SK-N-SH (cell line): ENCODE measurements at regions of chr2 and their contacts with region 1.

Region 1: GRCh38 chr2:50401772-50402653 is 629.9 kb downstream of the NRXN1 start:
- DNase-seq: peak; percentile 39
- H3K4me3 ChIP-seq: peak overlapping the region in 1 of 2 experiments; percentile 40; a peak in 1 of 4 replicates
- H3K27ac ChIP-seq: no peak overlapping the region
- H3K4me1 ChIP-seq: no peaks in the 10 kb centered on the region
- H3K27me3 ChIP-seq: no peaks in the 10 kb centered on the region
- CTCF ChIP-seq: peak; percentile 87
- EP300 ChIP-seq: no peak
- RAD21 ChIP-seq: peak; percentile 94

Region 2: GRCh38 chr2:48946449-48947048 is 1455.5 kb before region 1 on chr2:
- CTCF ChIA-PET with region 1: interaction called, 20 read pairs
- POLR2A ChIA-PET with region 1: no interaction called
- DNase-seq: peak; percentile 60
- H3K4me3 ChIP-seq: no peak overlapping the region; a peak in 1 of 4 replicates
- H3K27ac ChIP-seq: no peak overlapping the region
- H3K4me1 ChIP-seq: no peaks in the 10 kb centered on the region; a peak in 1 of 4 replicates
- H3K27me3 ChIP-seq: no peaks in the 10 kb centered on the region
- CTCF ChIP-seq: peak; percentile 89
- EP300 ChIP-seq: no peak
- RAD21 ChIP-seq: peak; percentile 97

Region 3: GRCh38 chr2:49616800-49617199 is 785.2 kb before region 1 on chr2:
- CTCF ChIA-PET with region 1: interaction called, 14 read pairs
- POLR2A ChIA-PET with region 1: no interaction called
- DNase-seq: peak; percentile 32
- H3K4me3 ChIP-seq: peak overlapping the region in 1 of 2 experiments; percentile 28; a peak in 1 of 4 replicates
- H3K27ac ChIP-seq: no peak overlapping the region
- H3K4me1 ChIP-seq: no peaks in the 10 kb centered on the region
- H3K27me3 ChIP-seq: no peaks in the 10 kb centered on the region
- CTCF ChIP-seq: peak; percentile 36
- EP300 ChIP-seq: no peak
- RAD21 ChIP-seq: peak; percentile 75

Region 4: DNA sequence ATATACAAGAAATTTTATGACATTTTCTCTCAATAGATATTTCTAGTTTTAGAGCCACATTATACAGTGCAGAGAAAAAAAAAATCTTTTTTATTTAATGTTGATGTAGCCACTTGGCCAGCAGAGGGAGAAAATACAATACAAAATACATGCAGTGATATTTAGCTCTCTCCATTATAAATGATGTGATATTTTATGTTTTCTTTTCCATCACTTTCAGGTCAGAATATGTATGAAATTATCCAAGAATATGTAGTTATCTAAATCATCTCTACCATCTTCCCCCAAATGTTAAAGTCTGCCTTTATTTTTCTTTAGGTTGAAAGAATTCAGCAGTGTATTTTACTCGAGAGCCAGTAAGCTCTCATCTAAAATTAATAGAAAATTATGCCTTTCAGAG is 714.1 kb before region 1 on chr2:
- CTCF ChIA-PET with region 1: interaction called, 36 read pairs
- POLR2A ChIA-PET with region 1: no interaction called
- DNase-seq: no peak
- H3K4me3 ChIP-seq: peak overlapping the region in 1 of 2 experiments; percentile 16; a peak in 1 of 4 replicates
- H3K27ac ChIP-seq: no peak overlapping the region
- H3K4me1 ChIP-seq: no peaks in the 10 kb centered on the region
- H3K27me3 ChIP-seq: no peaks in the 10 kb centered on the region
- CTCF ChIP-seq: peak; percentile 60
- EP300 ChIP-seq: no peak
- RAD21 ChIP-seq: peak; percentile 67

Region 5: DNA sequence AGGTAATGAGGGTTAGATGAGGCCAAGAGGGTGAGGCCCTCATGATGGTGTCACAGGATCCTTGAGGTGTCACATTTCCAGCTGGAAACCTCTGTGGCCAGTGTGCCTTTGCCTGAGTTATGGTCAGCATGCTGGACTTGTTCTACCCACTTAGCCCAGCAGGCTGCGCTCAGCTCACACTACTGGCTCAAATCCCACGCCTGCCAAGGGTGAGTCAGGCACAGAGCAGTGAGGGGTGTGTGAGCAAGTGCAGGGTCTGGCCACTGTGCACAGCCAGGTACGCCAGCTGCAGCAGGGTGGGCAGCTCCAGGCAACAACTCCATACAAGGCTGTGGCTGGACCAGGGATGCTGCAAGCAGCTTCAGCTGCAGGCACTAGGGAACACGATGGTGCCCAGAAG is 631.1 kb before region 1 on chr2:
- CTCF ChIA-PET with region 1: interaction called, 46 read pairs
- POLR2A ChIA-PET with region 1: no interaction called
- DNase-seq: peak; percentile 35
- H3K4me3 ChIP-seq: no peak overlapping the region; a peak in 1 of 4 replicates
- H3K27ac ChIP-seq: no peak overlapping the region
- H3K4me1 ChIP-seq: no peaks in the 10 kb centered on the region
- H3K27me3 ChIP-seq: no peaks in the 10 kb centered on the region
- CTCF ChIP-seq: peak; percentile 44
- EP300 ChIP-seq: no peak
- RAD21 ChIP-seq: peak; percentile 84

Region 6: GRCh38 chr2:50143822-50144575 is 258.0 kb before region 1 on chr2:
- CTCF ChIA-PET with region 1: interaction called, 14 read pairs
- POLR2A ChIA-PET with region 1: no interaction called
- DNase-seq: peak; percentile 43
- H3K4me3 ChIP-seq: peak overlapping the region; percentile 33 to 56; a peak in 2 of 4 replicates
- H3K27ac ChIP-seq: no peak overlapping the region; a peak in 1 of 4 replicates
- H3K4me1 ChIP-seq: no peaks in the 10 kb centered on the region; a peak in 1 of 4 replicates
- H3K27me3 ChIP-seq: no peaks in the 10 kb centered on the region
- CTCF ChIP-seq: peak; percentile 76
- EP300 ChIP-seq: no peak
- RAD21 ChIP-seq: peak; percentile 88

Region 7: DNA sequence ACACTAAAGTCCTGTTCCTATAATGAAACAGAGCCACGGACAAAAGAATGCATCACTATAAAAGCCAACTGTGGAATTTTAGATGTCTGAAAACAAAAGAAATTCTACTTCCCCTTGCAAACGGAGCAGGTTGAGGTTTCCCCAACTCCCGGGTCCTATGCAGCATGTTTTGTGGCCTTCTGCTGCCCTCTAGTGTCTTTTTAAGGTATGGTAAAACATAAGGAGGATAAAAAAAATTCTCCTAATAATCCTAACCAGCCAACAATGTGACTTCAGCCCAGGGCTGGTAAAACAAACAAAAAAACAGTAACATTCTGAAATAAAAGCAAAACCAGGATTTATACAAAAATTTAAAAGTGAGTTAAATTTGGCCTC is 90.5 kb after region 1 on chr2:
- CTCF ChIA-PET with region 1: interaction called, 48 read pairs
- POLR2A ChIA-PET with region 1: no interaction called
- DNase-seq: peak; percentile 57
- H3K4me3 ChIP-seq: peak overlapping the region in 1 of 2 experiments; percentile 11; a peak in 2 of 4 replicates
- H3K27ac ChIP-seq: no peak overlapping the region
- H3K4me1 ChIP-seq: no peaks in the 10 kb centered on the region; a peak in 1 of 4 replicates
- H3K27me3 ChIP-seq: no peaks in the 10 kb centered on the region; the same call in 1 of the 2 replicates
- CTCF ChIP-seq: peak; percentile 77
- EP300 ChIP-seq: no peak
- RAD21 ChIP-seq: peak; percentile 87

Region 8: GRCh38 chr2:50732796-50733195 is 330.8 kb after region 1 on chr2:
- CTCF ChIA-PET with region 1: no interaction called
- POLR2A ChIA-PET with region 1: no interaction called
- DNase-seq: no peak
- H3K4me3 ChIP-seq: no peak overlapping the region
- H3K27ac ChIP-seq: no peak overlapping the region
- H3K4me1 ChIP-seq: no peaks in the 10 kb centered on the region
- H3K27me3 ChIP-seq: no peaks in the 10 kb centered on the region
- CTCF ChIP-seq: no peak
- EP300 ChIP-seq: no peak
- RAD21 ChIP-seq: no peak